Calu3 (cell line): ENCODE measurements at regions of chr7 and their contacts with region 1.

Region 1: DNA sequence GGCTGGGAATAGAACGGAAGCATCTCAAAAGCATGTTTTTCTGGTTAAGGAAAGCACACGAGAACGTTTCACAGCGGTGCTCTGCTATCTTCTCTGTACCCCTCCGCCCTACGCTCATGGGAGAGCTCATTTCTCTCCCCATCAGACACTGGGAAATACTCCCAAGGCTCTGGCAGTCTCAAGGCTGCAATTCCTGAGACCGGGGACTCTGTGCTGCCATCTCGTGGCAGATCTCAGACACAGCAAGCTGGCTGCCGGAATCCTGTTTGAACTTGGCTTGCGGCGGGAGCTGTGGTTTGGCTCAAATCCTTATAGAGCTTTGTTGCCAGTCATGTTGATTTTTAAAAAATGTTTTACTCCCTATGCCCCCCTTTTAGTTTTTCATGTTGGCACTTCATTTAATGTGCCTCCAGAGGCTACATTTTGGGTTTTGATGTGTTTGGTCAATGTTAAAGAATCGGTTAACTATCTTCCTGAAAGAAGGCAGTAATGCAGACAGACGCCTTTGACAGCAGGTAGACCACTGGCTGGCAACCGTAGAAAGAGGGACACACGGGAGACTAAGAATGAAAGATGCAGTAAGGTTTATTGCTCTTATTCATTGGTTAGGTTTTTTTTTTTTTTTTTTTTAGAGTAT is 27.6 kb downstream of the BMPER start:
- DNase-seq: peak; percentile 87
- H3K4me3 Mint-ChIP-seq: no peak overlapping the region
- H3K27ac Mint-ChIP-seq: no peak overlapping the region
- H3K4me1 Mint-ChIP-seq: no peaks in the 10 kb centered on the region
- H3K27me3 Mint-ChIP-seq: peaks cover 59% of the 10 kb centered on the region
- CTCF ChIP-seq: peak; percentile 97

Region 2: DNA sequence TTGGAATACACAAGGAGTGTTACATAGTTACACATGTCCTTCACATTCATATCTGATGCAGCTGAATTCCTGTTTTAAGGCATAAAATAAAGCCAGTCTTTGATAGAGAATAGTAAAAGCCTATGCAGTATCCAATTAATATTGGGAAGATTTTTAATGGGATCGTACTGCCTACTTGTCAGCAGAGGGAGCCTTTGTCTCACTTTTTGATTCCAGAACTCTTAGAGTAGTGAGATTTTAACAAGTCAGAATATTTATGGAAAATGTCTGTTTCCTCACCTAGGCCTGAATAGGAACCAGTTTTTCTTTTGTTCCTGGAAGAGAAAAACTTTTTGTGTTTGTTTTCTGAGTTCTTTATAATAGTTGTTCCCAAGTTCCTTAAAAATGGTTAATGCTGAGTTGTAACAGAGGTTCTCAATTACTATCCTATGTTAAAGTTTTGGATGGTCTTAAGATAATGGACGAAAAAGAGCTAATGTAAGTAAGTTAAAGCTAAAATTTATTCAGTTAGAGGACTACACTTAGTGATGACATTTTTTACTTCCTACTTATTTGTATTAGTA is 689.5 kb before region 1 on chr7:
- CTCF ChIA-PET with region 1: interaction called, 19 read pairs
- intact Hi-C with region 1: loop called (anchors 1 kb)
- DNase-seq: peak; percentile 15
- H3K4me3 Mint-ChIP-seq: no peak overlapping the region
- H3K27ac Mint-ChIP-seq: no peak overlapping the region
- H3K4me1 Mint-ChIP-seq: no peaks in the 10 kb centered on the region
- H3K27me3 Mint-ChIP-seq: no peaks in the 10 kb centered on the region
- CTCF ChIP-seq: peak; percentile 79

Region 3: GRCh38 chr7:33423646-33424020 is 509.3 kb before region 1 on chr7:
- CTCF ChIA-PET with region 1: interaction called, 6 read pairs
- intact Hi-C with region 1: loop called (anchors 5 kb)
- DNase-seq: peak; percentile 55
- H3K4me3 Mint-ChIP-seq: no peak overlapping the region
- H3K27ac Mint-ChIP-seq: no peak overlapping the region
- H3K4me1 Mint-ChIP-seq: no peaks in the 10 kb centered on the region
- H3K27me3 Mint-ChIP-seq: peaks cover under 1% of the 10 kb centered on the region
- CTCF ChIP-seq: peak; percentile 71

Region 4: GRCh38 chr7:33895025-33895804 is 37.7 kb before region 1 on chr7:
- CTCF ChIA-PET with region 1: interaction called, 13 read pairs
- intact Hi-C with region 1: no loop called
- DNase-seq: peak; percentile 95
- H3K4me3 Mint-ChIP-seq: no peak overlapping the region
- H3K27ac Mint-ChIP-seq: no peak overlapping the region
- H3K4me1 Mint-ChIP-seq: peaks cover 18% of the 10 kb centered on the region
- H3K27me3 Mint-ChIP-seq: peaks cover 72% of the 10 kb centered on the region
- CTCF ChIP-seq: peak; percentile 95

Region 5: DNA sequence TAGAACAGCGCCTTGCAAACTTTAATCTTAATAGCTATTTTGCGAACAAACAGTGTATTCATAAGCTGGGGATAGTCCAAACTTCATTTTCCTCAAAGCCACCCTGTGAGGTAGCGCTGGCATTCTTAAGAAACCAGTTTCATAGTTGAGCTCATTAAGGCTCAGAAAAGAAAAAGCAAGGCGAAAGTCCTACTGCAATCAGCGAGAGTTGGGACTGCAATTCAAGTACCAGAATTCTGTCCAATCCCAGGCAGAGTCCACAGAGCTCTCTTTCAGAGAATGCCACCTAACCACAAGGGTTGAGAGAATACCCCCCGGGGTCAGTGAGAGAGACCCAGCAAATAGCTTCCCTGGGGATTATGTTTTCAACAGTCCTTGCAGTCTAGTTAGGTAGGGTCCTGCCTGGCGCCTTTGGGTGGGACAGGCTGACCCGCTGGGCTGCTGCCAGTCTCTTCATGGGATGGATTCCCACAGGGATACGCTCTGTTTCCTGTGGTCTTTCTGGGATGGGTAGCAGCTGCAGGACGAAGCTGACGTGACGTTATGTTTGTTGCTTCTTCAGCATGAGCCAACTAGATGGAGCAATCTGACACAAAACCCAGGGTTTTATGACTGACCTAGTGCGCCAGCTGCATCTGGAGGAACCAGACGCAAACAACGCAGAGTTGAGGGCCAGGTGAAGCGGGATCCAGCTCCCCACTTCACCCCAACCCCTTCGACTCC is 11.6 kb before region 1 on chr7:
- CTCF ChIA-PET with region 1: interaction called, 18 read pairs
- intact Hi-C with region 1: no loop called
- DNase-seq: no peak
- H3K4me3 Mint-ChIP-seq: no peak overlapping the region
- H3K27ac Mint-ChIP-seq: no peak overlapping the region
- H3K4me1 Mint-ChIP-seq: no peaks in the 10 kb centered on the region
- H3K27me3 Mint-ChIP-seq: peaks cover 88% of the 10 kb centered on the region
- CTCF ChIP-seq: no peak

Region 6: DNA sequence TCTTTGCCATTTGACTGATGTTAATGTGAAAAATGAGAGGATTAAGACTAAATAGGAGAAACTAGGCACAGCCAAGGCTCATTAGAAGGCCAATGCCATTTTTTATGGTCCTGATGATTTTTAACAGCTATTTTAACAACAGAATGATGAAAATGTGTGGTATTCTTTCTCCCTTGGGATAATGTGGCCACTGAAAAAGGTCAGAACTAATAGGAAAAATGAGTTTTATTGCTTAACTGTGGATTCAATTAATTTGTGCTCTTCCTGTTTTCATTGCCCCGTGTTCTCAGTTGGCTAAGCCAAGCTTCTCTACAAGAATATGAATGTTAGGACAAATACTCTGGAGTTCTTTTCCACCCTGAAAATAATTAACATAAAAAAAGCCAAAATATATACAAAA is 29.0 kb after region 1 on chr7:
- CTCF ChIA-PET with region 1: no interaction called
- intact Hi-C with region 1: no loop called
- DNase-seq: no peak
- H3K4me3 Mint-ChIP-seq: no peak overlapping the region
- H3K27ac Mint-ChIP-seq: no peak overlapping the region
- H3K4me1 Mint-ChIP-seq: no peaks in the 10 kb centered on the region
- H3K27me3 Mint-ChIP-seq: peaks cover 37% of the 10 kb centered on the region
- CTCF ChIP-seq: no peak

Region 7: DNA sequence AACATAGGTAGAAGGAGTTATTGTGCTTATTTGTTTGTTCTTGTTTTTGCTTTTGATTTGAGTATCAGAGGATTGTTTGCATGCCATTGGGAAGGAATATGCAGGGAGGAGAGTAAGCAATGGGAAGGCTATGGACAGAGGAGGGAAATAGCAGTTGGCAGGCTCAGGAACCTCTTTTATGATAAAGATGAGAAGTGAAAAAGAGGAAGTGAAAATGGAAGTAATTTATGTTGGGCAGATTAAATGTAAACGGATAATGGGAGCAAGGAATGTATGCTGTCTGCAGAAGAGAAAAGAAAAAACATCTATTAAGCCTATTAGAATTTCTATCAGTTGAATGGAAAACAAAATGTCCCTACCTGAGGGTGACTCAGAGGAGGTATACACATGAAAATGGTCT is 635.0 kb after region 1 on chr7:
- CTCF ChIA-PET with region 1: no interaction called
- intact Hi-C with region 1: no loop called
- DNase-seq: no peak
- H3K4me3 Mint-ChIP-seq: no peak overlapping the region
- H3K27ac Mint-ChIP-seq: no peak overlapping the region
- H3K4me1 Mint-ChIP-seq: no peaks in the 10 kb centered on the region
- H3K27me3 Mint-ChIP-seq: no peaks in the 10 kb centered on the region
- CTCF ChIP-seq: no peak